ENCODE measurements at regions of chr1 and their contacts with region 1.

Region 1: GRCh38 chr1:223845810-223846682 is at the start of gene TP53BP2:
- DNase-seq: peak; percentile 94
- H3K4me3 ChIP-seq: peak within 1 kb of the TSS; percentile 91
- H3K27ac ChIP-seq: peak within 1 kb of the TSS; percentile 99
- H3K4me1 ChIP-seq: peaks cover 7% of the 10 kb centered on the region
- H3K27me3 ChIP-seq: no peaks in the 10 kb centered on the region
- CTCF ChIP-seq: peak; percentile 70
- total RNA-seq, gene TP53BP2: 77.8 and 93.3 TPM in 2 replicates

Region 2: GRCh38 chr1:223819730-223820514 is 26.1 kb before region 1 on chr1:
- CTCF ChIA-PET with region 1: no interaction called
- POLR2A ChIA-PET with region 1: interaction called, 11 read pairs
- intact Hi-C with region 1: no loop called
- DNase-seq: peak; percentile 87
- H3K4me3 ChIP-seq: no peak overlapping the region
- H3K27ac ChIP-seq: peak overlapping the region; percentile 84
- H3K4me1 ChIP-seq: peaks cover 54% of the 10 kb centered on the region
- H3K27me3 ChIP-seq: no peaks in the 10 kb centered on the region
- CTCF ChIP-seq: no peak

Region 3: DNA sequence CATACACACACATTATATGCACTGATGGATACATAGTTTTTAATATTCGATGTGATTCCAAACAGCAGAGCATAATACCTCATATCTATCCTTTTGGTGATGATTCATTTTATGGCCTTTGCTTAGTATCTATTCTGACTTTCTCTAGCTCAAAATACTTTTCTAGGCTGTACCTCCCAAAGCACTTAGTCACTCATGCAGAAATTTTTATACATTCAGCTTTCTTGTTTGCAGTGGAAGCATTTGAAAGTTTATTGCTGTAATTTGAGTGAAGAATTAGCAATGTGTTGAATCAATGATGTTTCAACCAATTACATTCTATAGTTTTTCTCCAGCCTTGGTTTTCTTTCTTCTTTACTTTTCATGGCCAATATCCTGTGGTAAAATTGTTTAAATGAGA is 1515.1 kb after region 1 on chr1:
- CTCF ChIA-PET with region 1: no interaction called
- POLR2A ChIA-PET with region 1: no interaction called
- intact Hi-C with region 1: no loop called
- DNase-seq: peak; percentile 36
- H3K4me3 ChIP-seq: no peak overlapping the region
- H3K27ac ChIP-seq: no peak overlapping the region
- H3K4me1 ChIP-seq: no peaks in the 10 kb centered on the region
- H3K27me3 ChIP-seq: no peaks in the 10 kb centered on the region
- CTCF ChIP-seq: no peak

Measured in A673 (cell line).